ENCODE measurements at regions of chr20 and their contacts with region 1.

Region 1: DNA sequence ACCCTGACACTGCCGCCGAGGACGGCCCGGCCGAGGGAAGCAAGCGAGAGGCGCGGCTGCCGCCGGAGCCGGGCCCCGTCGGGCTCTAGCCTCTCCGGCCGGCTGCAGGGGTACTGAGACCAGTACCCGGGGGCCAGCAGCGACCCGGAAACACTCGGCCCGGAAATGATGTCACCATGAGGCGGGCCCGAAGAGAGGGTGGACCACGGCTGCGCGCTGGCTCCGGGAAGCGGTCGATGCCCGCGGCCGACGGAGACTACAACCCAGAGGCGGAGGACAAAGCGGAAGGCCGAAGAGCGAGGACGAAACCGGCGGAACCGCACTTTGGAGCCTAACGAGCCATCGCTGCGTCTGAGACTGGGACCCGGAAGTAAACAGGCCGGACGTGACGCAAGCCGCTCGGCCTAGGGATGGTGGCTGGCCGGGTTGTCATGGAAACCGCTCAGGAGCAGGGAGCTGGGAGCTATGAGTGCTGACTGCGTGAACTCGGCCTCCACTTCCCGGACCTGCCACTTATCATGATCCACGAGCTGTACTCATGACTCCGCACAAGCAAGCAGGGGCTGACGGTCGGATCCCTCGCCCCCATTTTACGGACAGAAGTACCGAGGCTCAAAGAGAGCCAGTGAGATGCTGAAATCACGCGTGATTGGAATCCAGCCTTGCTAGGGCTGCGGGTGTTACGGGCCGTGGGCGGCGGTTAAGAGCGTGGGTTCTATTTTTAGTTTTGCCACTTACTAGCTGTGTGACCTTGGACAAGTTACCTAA is at the start of gene SPATA2:
- DNase-seq: peak; percentile 89 to 97
- ATAC-seq: peak; percentile 90 to 94
- H3K4me3 ChIP-seq: peak within 1 kb of the TSS; percentile 93
- H3K27ac ChIP-seq: peak within 1 kb of the TSS; percentile 99
- H3K4me1 ChIP-seq: peaks cover 23% of the 10 kb centered on the region
- CTCF ChIP-seq: no peak
- EP300 ChIP-seq: no peak
- POLR2A ChIP-seq: peak; percentile 45
- RAD21 ChIP-seq: no peak
- polyA plus RNA-seq, gene SPATA2: 4.9 and 5.1 TPM in 2 replicates

Region 2: GRCh38 chr20:49559401-49560081 is 356.0 kb before region 1 on chr20:
- CTCF ChIA-PET with region 1: no interaction called
- POLR2A ChIA-PET with region 1: no interaction called
- DNase-seq: no peak
- ATAC-seq: no peak
- H3K4me3 ChIP-seq: no peak overlapping the region
- H3K27ac ChIP-seq: no peak overlapping the region
- H3K4me1 ChIP-seq: peaks cover 19% of the 10 kb centered on the region
- CTCF ChIP-seq: no peak
- EP300 ChIP-seq: no peak
- POLR2A ChIP-seq: no peak
- RAD21 ChIP-seq: no peak

Region 3: DNA sequence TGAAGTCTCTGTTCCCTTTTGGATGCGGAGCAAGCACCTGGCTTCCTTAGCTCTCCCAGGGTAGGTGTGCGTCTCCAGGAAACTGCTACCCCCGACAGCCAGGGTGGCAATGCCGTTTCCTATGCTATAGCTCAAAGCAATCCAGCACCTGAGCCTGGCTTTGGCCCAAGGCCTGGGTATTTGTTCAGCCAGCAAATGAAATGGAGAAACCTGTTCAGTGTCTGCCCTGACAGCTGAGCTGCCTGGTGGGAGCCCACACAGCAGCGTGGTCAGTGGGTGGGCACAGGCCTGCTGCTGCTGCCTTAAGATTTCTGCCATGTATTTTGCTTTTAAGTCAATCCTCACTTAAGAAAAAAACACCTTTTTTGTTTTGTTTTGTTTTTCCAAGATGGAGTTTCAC is 14.0 kb before region 1 on chr20:
- CTCF ChIA-PET with region 1: interaction called, 44 read pairs
- POLR2A ChIA-PET with region 1: interaction called, 3 read pairs
- DNase-seq: no peak
- ATAC-seq: no peak
- H3K4me3 ChIP-seq: no peak overlapping the region
- H3K27ac ChIP-seq: no peak overlapping the region
- H3K4me1 ChIP-seq: peaks cover 14% of the 10 kb centered on the region; the same call in 2 of the 3 replicates
- CTCF ChIP-seq: no peak
- EP300 ChIP-seq: no peak
- POLR2A ChIP-seq: no peak
- RAD21 ChIP-seq: no peak

Region 4: DNA sequence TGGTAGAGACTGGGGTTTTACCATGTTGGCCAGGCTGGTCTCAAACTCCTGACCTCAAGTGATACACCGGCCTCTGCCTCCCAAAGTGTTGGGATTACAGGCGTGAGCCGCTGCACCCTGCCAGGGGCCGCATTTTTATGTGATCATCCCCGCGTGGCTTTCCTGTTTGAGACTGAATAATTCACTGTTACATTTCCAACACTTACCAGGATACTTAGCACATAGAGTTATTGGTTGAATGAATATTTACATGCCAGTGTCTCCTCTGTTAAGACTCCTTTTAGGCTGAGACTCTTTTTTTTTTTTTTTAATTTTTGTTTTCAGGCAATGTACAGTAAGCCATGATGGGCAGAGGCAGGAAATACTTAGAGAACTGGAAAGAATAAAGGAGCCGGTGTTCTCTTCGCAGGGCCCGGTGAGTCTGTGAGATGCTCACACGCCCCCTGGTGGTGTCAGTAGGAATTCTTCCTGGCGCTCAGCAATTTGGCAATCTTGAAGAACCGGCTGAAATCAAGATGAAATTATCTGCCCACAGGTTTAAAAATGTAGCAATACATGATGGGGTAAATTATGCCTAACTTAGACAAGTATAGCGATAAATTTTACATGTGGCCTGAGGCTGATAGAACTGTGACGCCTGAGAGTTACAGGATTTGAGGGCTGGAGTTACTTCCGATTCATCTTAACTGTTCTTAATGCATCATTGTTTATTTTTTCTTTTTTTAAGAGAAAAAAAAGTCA is 13.0 kb after region 1 on chr20:
- CTCF ChIA-PET with region 1: interaction called, 15 read pairs
- POLR2A ChIA-PET with region 1: interaction called, 5 read pairs
- DNase-seq: peak; percentile 80 to 86
- ATAC-seq: peak; percentile 92 to 96
- H3K4me3 ChIP-seq: no peak overlapping the region
- H3K27ac ChIP-seq: peak overlapping the region in 1 of 2 experiments; percentile 61; a peak in 3 of 6 replicates
- H3K4me1 ChIP-seq: peaks cover 4% of the 10 kb centered on the region; the same call in 2 of the 3 replicates
- CTCF ChIP-seq: peak; percentile 87
- EP300 ChIP-seq: no peak
- POLR2A ChIP-seq: no peak
- RAD21 ChIP-seq: peak; percentile 73 to 75

Region 5: DNA sequence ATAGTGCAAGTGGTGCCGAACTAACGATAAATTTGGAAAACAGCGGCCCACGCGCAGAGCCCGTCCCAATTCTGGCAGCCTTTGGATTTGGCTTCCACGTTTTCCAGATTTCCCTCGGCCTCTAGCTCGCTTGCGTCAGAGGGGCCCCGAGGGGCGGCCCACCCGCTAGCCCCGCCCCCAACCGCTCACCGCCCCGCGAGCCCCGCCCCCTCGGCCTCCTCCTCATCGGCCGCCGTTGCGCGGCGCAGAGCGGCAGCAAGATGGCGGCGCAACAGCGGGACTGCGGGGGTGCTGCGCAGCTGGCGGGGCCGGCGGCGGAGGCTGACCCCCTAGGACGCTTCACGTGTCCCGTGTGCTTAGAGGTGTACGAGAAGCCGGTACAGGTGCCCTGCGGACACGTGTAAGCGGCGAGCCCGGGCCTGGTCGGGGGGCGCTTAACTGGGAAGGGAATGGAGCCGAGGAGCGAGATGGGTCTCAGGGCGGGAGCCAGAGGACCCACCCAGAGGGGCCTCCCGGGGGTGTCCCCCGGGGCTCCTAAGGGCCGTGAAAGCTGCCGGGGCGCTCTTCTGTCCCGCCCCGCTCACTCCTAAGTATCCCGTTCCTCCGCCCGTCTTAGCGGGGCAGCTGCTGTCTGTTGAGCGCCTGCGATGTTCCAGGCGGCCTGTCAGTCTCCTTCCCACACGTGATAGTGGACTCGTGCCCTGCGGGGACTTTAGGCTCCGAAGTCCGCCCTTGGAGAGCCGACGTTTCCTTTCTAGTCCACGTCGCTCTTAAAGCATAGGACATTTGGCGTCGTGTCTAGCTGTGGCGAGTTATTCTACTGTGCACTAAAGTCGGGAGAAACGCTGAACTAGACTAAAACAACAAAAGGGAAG is 20.8 kb after region 1 on chr20 and contains the start of gene RNF114:
- CTCF ChIA-PET with region 1: interaction called, 3 read pairs
- POLR2A ChIA-PET with region 1: interaction called, 11 read pairs
- DNase-seq: peak; percentile 72 to 90
- ATAC-seq: peak; percentile 90 to 91
- H3K4me3 ChIP-seq: peak within 1 kb of the TSS; percentile 71
- H3K27ac ChIP-seq: peak within 1 kb of the TSS; percentile 79 to 95
- H3K4me1 ChIP-seq: peaks cover 20% of the 10 kb centered on the region
- CTCF ChIP-seq: no peak
- EP300 ChIP-seq: 0 out of 5 replicates have a peak, but pooled peaks of 1 of the 2 experiments have one; percentile 8
- POLR2A ChIP-seq: peak; percentile 92
- RAD21 ChIP-seq: no peak
- polyA plus RNA-seq, gene RNF114: 44.8 and 67.8 TPM in 2 replicates

Region 6: DNA sequence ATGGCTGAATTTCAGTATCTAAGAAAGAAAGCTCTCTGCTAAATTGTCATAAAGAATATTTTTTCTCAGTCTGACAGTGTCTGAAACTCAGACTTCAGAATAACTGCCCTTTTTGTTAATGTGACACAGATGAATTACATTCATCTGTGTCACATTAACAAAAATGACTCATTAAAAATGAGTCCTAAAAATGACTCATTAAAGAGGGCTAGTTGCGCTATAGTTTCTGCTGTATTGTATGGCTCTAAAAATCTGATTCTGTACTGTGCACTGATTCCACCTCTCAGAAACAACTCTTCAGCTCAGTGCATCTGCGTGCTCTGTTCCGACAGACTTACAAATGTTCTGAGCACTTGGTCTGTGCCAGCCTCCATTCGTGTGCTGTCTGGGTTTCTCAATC is 35.6 kb after region 1 on chr20:
- CTCF ChIA-PET with region 1: no interaction called
- POLR2A ChIA-PET with region 1: no interaction called
- DNase-seq: no peak
- ATAC-seq: no peak
- H3K4me3 ChIP-seq: no peak overlapping the region
- H3K27ac ChIP-seq: no peak overlapping the region
- H3K4me1 ChIP-seq: peaks cover 28% of the 10 kb centered on the region
- CTCF ChIP-seq: no peak
- EP300 ChIP-seq: no peak
- POLR2A ChIP-seq: no peak
- RAD21 ChIP-seq: no peak

Measured in A549 (cell line).